CD4-positive, alpha-beta memory T cell (primary cell): ENCODE measurements at regions of chr5 and their contacts with region 1.

Region 1: DNA sequence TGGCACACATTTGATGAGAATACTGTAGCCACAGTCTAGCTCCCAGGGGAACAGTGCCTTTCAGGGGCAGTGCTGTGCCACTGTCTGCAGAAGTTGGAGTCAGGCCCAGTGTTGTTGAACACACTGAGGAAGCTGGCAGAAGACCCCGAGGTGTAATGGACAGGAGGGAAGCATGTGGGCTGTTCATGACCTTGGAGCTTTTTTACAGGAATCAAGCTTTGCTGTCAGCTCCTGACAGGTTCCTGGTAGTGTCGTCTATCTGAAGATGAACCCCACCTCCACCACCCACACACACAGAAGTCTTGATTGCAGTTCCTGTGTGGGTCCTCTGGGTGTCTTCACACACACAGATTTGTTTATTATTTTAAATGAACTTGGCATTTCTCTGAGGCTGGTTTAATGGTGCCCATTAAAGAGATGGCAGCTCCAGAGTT is 40.3 kb upstream of the TNFAIP8 start:
- DNase-seq: peak; percentile 64 to 78 (median 70)
- H3K4me3 ChIP-seq: no peak overlapping the region
- H3K4me3 Mint-ChIP-seq: peak overlapping the region; percentile 52 to 75 (median 68)
- H3K27ac ChIP-seq: peak overlapping the region; percentile 41
- H3K27ac Mint-ChIP-seq: peak overlapping the region; percentile 90 to 99 (median 92)
- H3K4me1 ChIP-seq: peaks cover 96% of the 10 kb centered on the region
- H3K4me1 Mint-ChIP-seq: peaks cover 79 to 96% (median 87%) of the 10 kb centered on the region in 4 donors
- H3K27me3 ChIP-seq: no peaks in the 10 kb centered on the region
- H3K27me3 Mint-ChIP-seq: no peaks in the 10 kb centered on the region

Region 2: GRCh38 chr5:119267958-119268386 is 47.6 kb before region 1 on chr5:
- CTCF ChIA-PET with region 1: interaction called, 32 read pairs
- POLR2A ChIA-PET with region 1: interaction called, 151 read pairs
- intact Hi-C with region 1: no loop called
- DNase-seq: peak; percentile 74 to 93 (median 83)
- H3K4me3 ChIP-seq: peak overlapping the region; percentile 53 to 83
- H3K4me3 Mint-ChIP-seq: peak overlapping the region; percentile 97 to 100 (median 100)
- H3K27ac ChIP-seq: peak overlapping the region; percentile 90
- H3K27ac Mint-ChIP-seq: peak overlapping the region; percentile 96 to 99 (median 97)
- H3K4me1 ChIP-seq: peaks cover 30% of the 10 kb centered on the region
- H3K4me1 Mint-ChIP-seq: peaks cover 37 to 72% (median 43%) of the 10 kb centered on the region in 4 donors
- H3K27me3 ChIP-seq: no peaks in the 10 kb centered on the region
- H3K27me3 Mint-ChIP-seq: no peaks in the 10 kb centered on the region

Region 3: DNA sequence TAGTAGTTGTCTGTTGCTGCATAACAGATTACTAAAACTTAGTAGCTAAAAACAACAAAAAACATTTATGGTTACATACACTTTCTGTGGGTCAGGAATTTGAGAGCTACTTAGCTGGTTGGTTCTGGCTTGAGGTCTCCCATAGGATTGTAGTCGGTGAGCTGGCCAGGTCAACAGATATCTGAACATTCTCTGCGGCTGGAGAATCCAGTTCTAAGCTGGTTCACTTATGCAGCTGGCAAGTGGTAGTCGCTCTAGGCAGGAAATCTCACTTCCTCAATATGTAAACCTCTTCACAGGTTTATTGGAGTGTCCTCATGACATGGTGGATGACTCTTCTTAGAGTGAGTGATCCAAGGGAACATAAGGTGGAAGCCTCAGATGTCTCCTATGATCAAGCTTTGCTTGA is 25.4 kb before region 1 on chr5:
- CTCF ChIA-PET with region 1: interaction called, 34 read pairs
- POLR2A ChIA-PET with region 1: interaction called, 7 read pairs
- intact Hi-C with region 1: no loop called
- DNase-seq: no peak
- H3K4me3 ChIP-seq: peak overlapping the region in 1 of 2 donors; percentile 38
- H3K4me3 Mint-ChIP-seq: peak overlapping the region; percentile 71 to 92 (median 84)
- H3K27ac ChIP-seq: peak overlapping the region; percentile 88
- H3K27ac Mint-ChIP-seq: peak overlapping the region; percentile 91 to 99 (median 97)
- H3K4me1 ChIP-seq: peaks cover 82% of the 10 kb centered on the region
- H3K4me1 Mint-ChIP-seq: peaks cover 67 to 93% (median 83%) of the 10 kb centered on the region in 4 donors
- H3K27me3 ChIP-seq: no peaks in the 10 kb centered on the region
- H3K27me3 Mint-ChIP-seq: no peaks in the 10 kb centered on the region

Region 4: DNA sequence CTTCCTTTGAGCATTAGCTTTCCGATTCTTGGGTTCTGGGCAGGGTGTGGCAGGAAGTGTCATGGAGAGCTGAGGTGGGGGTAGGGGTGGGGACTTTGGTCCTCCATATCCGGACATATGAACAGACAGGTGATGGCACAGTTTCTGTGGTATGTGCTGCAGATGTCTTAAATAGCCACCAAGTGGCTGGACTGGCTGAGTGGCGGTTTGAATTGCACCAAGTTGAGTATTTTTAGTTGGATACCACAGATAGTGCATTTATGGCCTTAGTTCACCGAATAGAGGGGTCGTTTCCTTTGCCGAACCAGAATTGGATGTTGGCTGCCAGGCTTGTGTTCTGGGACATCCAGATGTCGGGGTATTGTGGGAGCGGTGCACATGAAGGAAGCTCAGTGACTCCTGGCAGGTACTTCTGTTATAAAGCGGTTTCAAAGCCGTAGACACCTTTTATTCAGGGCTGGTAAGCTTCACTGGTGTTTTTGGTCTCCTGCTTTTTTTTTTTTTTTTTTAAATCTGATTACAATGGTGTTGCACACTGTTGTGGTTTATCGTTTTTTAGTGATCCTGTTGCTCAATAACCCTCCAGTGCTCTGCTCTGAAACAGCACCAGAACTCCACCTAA is 25.2 kb after region 1 on chr5:
- CTCF ChIA-PET with region 1: interaction called, 149 read pairs
- POLR2A ChIA-PET with region 1: interaction called, 564 read pairs
- intact Hi-C with region 1: loop called (anchors 1 kb)
- DNase-seq: peak; percentile 71 to 85 (median 77)
- H3K4me3 ChIP-seq: peak overlapping the region; percentile 40 to 63
- H3K4me3 Mint-ChIP-seq: peak overlapping the region; percentile 80 to 89 (median 86)
- H3K27ac ChIP-seq: peak overlapping the region; percentile 75
- H3K27ac Mint-ChIP-seq: peak overlapping the region; percentile 89 to 97 (median 92)
- H3K4me1 ChIP-seq: peaks cover 99% of the 10 kb centered on the region
- H3K4me1 Mint-ChIP-seq: peaks cover 81 to 97% (median 89%) of the 10 kb centered on the region in 4 donors
- H3K27me3 ChIP-seq: no peaks in the 10 kb centered on the region
- H3K27me3 Mint-ChIP-seq: no peaks in the 10 kb centered on the region

Region 5: GRCh38 chr5:119360905-119361593 is 45.5 kb after region 1 on chr5:
- CTCF ChIA-PET with region 1: interaction called, 30 read pairs
- POLR2A ChIA-PET with region 1: interaction called, 7 read pairs
- intact Hi-C with region 1: no loop called
- DNase-seq: no peak
- H3K4me3 ChIP-seq: no peak overlapping the region
- H3K4me3 Mint-ChIP-seq: peak overlapping the region in 7 of 8 donors; percentile 43 to 92 (median 47)
- H3K27ac ChIP-seq: peak overlapping the region; percentile 11
- H3K27ac Mint-ChIP-seq: peak overlapping the region; percentile 86 to 97 (median 93)
- H3K4me1 ChIP-seq: peaks cover 98% of the 10 kb centered on the region
- H3K4me1 Mint-ChIP-seq: peaks cover 86 to 98% (median 93%) of the 10 kb centered on the region in 4 donors
- H3K27me3 ChIP-seq: no peaks in the 10 kb centered on the region
- H3K27me3 Mint-ChIP-seq: no peaks in the 10 kb centered on the region

Region 6: GRCh38 chr5:119411935-119412602 is 96.5 kb after region 1 on chr5:
- CTCF ChIA-PET with region 1: interaction called, 211 read pairs
- POLR2A ChIA-PET with region 1: interaction called, 22 read pairs
- intact Hi-C with region 1: loop called (anchors 1 kb)
- DNase-seq: peak; percentile 64 to 73 (median 69)
- H3K4me3 ChIP-seq: peak overlapping the region; percentile 33 to 39
- H3K4me3 Mint-ChIP-seq: peak overlapping the region; percentile 79 to 91 (median 83)
- H3K27ac ChIP-seq: no peak overlapping the region
- H3K27ac Mint-ChIP-seq: peak overlapping the region in 6 of 7 donors; percentile 43 to 88 (median 58)
- H3K4me1 ChIP-seq: peaks cover 7% of the 10 kb centered on the region
- H3K4me1 Mint-ChIP-seq: peaks cover 12 to 24% (median 15%) of the 10 kb centered on the region in 4 donors
- H3K27me3 ChIP-seq: no peaks in the 10 kb centered on the region
- H3K27me3 Mint-ChIP-seq: peaks cover 4 to 5% of the 10 kb centered on the region in 2 donors

Region 7: DNA sequence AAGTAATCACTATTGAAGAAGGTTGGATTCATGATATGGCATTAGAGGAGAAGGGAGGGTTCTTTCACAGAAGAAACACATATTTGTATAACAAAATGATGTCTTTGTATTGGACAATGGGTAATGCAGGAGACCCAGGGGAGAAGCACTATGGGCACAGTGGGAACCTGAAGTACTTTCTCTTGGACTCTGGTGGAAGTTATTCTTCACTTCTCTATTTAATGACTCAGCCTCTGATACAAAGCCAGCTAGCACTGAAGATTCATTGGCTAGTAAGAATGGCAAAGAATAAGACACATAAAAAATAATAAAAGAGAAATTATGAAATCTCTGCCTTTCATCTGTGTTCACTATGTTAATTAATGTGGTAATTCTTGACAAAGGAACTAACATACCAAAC is 998.7 kb after region 1 on chr5:
- CTCF ChIA-PET with region 1: no interaction called
- POLR2A ChIA-PET with region 1: no interaction called
- intact Hi-C with region 1: no loop called
- DNase-seq: no peak
- H3K4me3 ChIP-seq: no peak overlapping the region
- H3K4me3 Mint-ChIP-seq: no peak overlapping the region
- H3K27ac ChIP-seq: no peak overlapping the region
- H3K27ac Mint-ChIP-seq: no peak overlapping the region
- H3K4me1 ChIP-seq: no peaks in the 10 kb centered on the region
- H3K4me1 Mint-ChIP-seq: no peaks in the 10 kb centered on the region
- H3K27me3 ChIP-seq: no peaks in the 10 kb centered on the region
- H3K27me3 Mint-ChIP-seq: no peaks in the 10 kb centered on the region